Posterior vena cava (tissue), 2 donors: ENCODE measurements at regions of chr7 and their contacts with region 1.

Region 1: GRCh38 chr7:78063758-78064157 is 265.2 kb downstream of the PHTF2 start:
- DNase-seq: no peak

Region 2: GRCh38 chr7:78033410-78033809 is 30.3 kb before region 1 on chr7:
- intact Hi-C with region 1: loop called in 1 of 2 experiments (anchors 1 kb)
- DNase-seq: no peak

Region 3: GRCh38 chr7:78363866-78364265 is 300.1 kb after region 1 on chr7:
- intact Hi-C with region 1: no loop called
- DNase-seq: no peak